Activated T-helper 2 cell treated with anti-CD3 and anti-CD28 coated beads, Interferon-gamma antibody, Interleukin-2, Interleukin-4, amounts not matched to agents 10 μg/mL and 5 μg/mL and 100 μg/mL, durations not matched to agents 14 hours and 24 hours and 36 hours (primary cell): ENCODE measurements at regions of chr17 and their contacts with region 1.

Region 1: GRCh38 chr17:2336215-2336851 is at the start of gene TSR1:
- DNase-seq: peak; percentile 88
- H3K4me3 Mint-ChIP-seq: peak within 1 kb of the TSS; percentile 100
- H3K27ac Mint-ChIP-seq: peak within 1 kb of the TSS; percentile 97
- H3K4me1 Mint-ChIP-seq: peaks cover 21% of the 10 kb centered on the region
- H3K27me3 Mint-ChIP-seq: no peaks in the 10 kb centered on the region
- total RNA-seq, gene TSR1: 75.9 and 78.3 TPM in 2 replicates

Region 2: DNA sequence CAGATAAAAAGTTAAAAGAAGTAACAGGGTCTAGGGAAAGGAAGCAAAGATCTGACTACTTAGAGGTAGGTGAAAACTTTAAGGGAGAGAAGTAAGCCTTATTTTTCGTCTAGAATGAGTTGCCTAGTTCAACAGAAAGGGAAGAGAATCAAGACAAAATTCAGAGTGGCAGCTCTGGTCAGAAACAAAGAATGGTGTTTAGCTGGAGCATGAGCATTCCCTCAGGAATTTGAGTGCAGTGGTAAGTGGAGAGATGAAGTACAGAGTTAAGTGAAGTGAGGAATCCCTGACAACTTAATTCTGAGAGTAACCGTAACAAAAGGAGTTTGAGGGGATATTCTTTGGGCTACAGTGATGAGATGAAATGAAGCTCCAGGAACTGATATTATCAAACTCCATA is 44.2 kb before region 1 on chr17:
- intact Hi-C with region 1: no loop called
- DNase-seq: no peak
- H3K4me3 Mint-ChIP-seq: no peak overlapping the region
- H3K27ac Mint-ChIP-seq: no peak overlapping the region
- H3K4me1 Mint-ChIP-seq: peaks cover 22% of the 10 kb centered on the region
- H3K27me3 Mint-ChIP-seq: no peaks in the 10 kb centered on the region

Region 3: DNA sequence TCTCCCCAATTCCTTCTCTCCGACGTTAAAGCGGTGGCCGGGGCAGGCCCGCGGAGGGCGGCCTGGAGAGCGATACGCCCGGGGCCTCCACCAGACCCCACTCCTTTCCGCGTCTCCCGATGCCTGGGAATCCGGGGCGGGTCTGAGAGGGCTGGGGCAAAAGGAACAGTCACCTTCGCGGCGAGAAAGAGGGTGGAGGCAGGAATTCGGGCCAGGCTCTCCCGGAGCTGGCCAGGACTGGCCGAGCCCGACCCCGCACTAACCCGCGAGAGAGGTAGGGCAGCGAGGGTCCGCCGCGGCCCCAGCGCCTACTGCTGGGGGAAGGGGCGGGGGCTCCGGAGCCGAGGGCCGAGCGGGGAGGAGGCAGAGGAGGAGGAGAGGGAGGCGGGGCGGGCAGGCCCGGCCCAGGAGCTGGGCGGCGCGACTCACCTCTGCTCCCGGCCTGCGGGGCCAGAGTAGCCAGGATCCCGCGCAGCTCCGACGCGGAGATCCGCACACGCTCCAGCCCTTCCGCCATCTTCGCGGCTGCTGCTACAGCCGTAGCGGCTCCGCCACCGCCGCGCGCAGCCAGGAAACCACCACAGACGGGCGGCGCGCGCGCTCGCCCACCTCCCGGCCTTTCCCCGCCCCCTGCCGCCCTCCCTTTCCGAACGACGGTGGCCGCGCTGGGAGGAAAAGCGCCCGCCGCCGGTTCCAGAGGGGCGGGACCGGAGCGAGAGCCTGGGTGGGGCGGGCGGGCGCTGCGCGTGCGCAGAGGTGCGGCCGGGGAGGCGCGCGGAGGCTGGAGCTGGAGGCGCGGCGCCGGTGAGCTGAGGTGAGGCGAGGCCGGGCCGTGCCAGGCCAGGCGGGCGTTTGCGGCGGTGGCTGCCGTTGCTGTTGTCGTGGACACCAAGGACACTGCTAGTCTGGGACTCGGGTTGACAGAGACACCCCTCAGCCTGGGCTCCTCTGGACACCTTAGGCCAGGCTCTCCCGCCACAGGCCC is 32.8 kb before region 1 on chr17 and contains the starts of genes SMG6 and SRR:
- intact Hi-C with region 1: loop called (anchors 1 kb)
- DNase-seq: peak; percentile 90
- H3K4me3 Mint-ChIP-seq: peak within 1 kb of the TSS; percentile 87
- H3K27ac Mint-ChIP-seq: peak within 1 kb of the TSS; percentile 70
- H3K4me1 Mint-ChIP-seq: peaks cover 25% of the 10 kb centered on the region
- H3K27me3 Mint-ChIP-seq: no peaks in the 10 kb centered on the region
- total RNA-seq, gene SMG6: 33.5 and 43.0 TPM in 2 replicates
- total RNA-seq, gene SRR: 17.3 and 18.4 TPM in 2 replicates

Region 4: DNA sequence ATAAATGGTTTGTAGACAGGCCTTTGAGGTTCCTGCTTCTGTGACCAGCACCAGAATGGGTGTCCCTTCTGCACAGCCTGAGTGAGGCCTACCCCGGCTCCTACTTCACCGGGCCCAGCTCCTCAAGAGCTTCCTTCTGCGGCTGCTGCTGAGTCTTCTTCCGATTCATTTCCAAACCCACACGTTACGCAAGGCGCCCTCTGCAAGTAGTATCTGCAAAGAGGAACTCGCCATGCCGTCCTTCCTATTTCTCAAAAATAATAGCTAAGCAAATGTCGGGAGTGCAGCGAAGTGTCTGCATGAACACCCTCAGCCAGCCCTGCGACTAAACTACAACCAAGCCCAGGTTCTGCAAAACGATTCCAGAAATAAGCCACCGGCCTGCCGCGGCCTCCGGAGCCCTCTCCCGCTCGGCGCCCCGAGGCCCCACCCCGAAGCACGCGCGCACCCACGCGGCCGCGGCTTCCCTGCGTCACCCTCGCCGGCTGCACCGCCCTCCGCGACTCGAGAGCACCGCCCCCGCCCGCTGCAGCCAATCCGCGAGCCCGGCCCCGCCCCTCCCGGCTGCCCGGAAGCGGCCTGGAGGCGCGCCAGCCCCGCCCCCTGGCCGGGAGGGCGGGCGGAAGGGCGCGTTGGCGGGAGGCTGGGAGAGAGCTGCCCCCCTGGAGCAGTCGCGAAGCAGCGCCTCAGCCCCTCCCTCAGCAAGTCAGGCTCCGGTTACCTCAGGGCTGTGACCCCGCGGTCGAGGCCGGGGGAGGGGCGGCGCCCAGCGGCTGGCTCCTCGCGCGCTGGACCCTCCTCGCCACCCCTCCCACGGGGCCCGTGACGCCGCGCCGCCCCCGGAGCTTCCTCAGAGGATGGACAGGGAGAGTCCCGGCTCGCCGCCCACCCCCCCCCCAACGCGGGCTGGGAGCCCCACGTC is 56.2 kb after region 1 on chr17:
- intact Hi-C with region 1: loop called (anchors 2 kb)
- DNase-seq: peak; percentile 96
- H3K4me3 Mint-ChIP-seq: peak overlapping the region; percentile 90
- H3K27ac Mint-ChIP-seq: peak overlapping the region; percentile 94
- H3K4me1 Mint-ChIP-seq: peaks cover 42% of the 10 kb centered on the region
- H3K27me3 Mint-ChIP-seq: no peaks in the 10 kb centered on the region

Region 5: DNA sequence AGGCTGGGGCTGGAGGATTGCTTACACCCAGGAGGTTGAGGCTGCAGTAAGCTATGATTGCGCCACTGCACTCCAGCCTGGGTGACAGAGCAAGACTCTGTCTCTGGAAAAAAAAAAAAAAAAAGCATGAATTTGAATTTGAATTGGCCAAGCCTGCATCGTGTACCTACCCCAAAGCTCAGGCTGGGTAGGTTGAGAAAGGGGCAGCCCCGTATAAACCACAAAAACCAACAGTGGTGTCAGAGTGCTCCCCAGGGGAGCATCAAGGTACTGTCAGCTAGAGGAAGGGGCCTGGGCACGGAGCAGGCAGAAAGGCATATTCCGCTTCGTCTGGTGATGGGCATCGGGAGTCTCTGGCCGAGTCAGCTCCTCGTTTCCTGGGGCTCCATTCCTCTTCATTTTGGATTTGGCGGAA is 500.8 kb after region 1 on chr17:
- intact Hi-C with region 1: no loop called
- DNase-seq: no peak
- H3K4me3 Mint-ChIP-seq: no peak overlapping the region
- H3K27ac Mint-ChIP-seq: no peak overlapping the region
- H3K4me1 Mint-ChIP-seq: peaks cover 5% of the 10 kb centered on the region
- H3K27me3 Mint-ChIP-seq: peaks cover 2% of the 10 kb centered on the region